WTC11 (cell line): ENCODE measurements at regions of chr4 and their contacts with region 1.

Region 1: GRCh38 chr4:109702950-109703663 is at the start of gene CASP6:
- DNase-seq: peak; percentile 84
- ATAC-seq: peak; percentile 75
- H3K4me3 Mint-ChIP-seq: peak within 1 kb of the TSS; percentile 90
- H3K27ac Mint-ChIP-seq: peak within 1 kb of the TSS; percentile 93
- H3K4me1 Mint-ChIP-seq: peaks cover 19% of the 10 kb centered on the region
- H3K27me3 Mint-ChIP-seq: no peaks in the 10 kb centered on the region
- CTCF ChIP-seq: peak; percentile 36; the same call in 1 of the 2 replicates
- total RNA-seq, gene CASP6: 23.7 to 26.0 TPM (median 24.5 TPM) in 3 replicates

Region 2: GRCh38 chr4:109803924-109804571 is 100.9 kb after region 1 on chr4:
- CTCF ChIA-PET with region 1: interaction called, 31 read pairs
- POLR2A ChIA-PET with region 1: no interaction called
- DNase-seq: peak; percentile 18
- ATAC-seq: peak; percentile 97
- H3K4me3 Mint-ChIP-seq: no peak overlapping the region
- H3K27ac Mint-ChIP-seq: no peak overlapping the region
- H3K4me1 Mint-ChIP-seq: no peaks in the 10 kb centered on the region
- H3K27me3 Mint-ChIP-seq: no peaks in the 10 kb centered on the region; the same call in 1 of the 2 replicates
- CTCF ChIP-seq: no peak